ENCODE measurements at regions of chr12 and their contacts with region 1.

Region 1: DNA sequence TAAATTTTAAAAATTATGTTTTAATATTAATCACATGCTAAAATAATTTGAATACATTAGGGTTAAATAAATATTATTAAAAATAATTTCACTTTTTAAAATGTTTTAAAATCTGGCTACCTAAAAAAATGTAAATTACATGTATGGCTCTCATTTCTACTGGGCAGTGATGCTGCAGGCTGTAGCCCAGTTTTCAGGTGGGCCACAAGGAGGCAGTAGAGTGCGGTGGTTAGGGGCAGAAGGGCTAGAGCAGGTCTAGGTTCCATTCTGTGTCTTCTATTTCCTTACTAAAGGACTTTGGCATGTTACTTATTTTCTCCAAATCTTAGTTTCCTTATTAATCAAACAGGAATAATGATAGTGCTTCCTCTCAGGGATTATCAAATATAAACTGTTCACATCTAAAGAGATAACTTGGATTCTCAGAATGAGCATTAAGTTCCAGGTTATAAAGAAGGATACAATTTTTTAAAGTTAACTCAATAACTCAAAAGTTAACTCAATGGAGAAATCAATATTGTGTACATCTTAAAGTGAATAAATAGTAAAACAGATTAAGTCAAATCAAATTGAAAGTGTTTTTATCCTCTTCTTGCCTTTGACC is 54.9 kb upstream of the OVCH1 start:
- DNase-seq: peak; percentile 30
- H3K4me3 ChIP-seq: no peak overlapping the region
- H3K27ac ChIP-seq: no peak overlapping the region
- H3K4me1 ChIP-seq: no peaks in the 10 kb centered on the region
- H3K27me3 ChIP-seq: no peaks in the 10 kb centered on the region
- CTCF ChIP-seq: peak; percentile 88 to 97

Region 2: GRCh38 chr12:29844667-29845066 is 292.2 kb after region 1 on chr12:
- CTCF ChIA-PET with region 1: no interaction called
- dilution Hi-C with region 1: no loop called
- in situ Hi-C with region 1: no loop called
- intact Hi-C with region 1: loop called (anchors 2 kb)
- DNase-seq: peak; percentile 54
- H3K4me3 ChIP-seq: no peak overlapping the region
- H3K27ac ChIP-seq: no peak overlapping the region
- H3K4me1 ChIP-seq: no peaks in the 10 kb centered on the region
- H3K27me3 ChIP-seq: peaks cover 1% of the 10 kb centered on the region
- CTCF ChIP-seq: peak in 1 of 2 donors; percentile 43

Region 3: DNA sequence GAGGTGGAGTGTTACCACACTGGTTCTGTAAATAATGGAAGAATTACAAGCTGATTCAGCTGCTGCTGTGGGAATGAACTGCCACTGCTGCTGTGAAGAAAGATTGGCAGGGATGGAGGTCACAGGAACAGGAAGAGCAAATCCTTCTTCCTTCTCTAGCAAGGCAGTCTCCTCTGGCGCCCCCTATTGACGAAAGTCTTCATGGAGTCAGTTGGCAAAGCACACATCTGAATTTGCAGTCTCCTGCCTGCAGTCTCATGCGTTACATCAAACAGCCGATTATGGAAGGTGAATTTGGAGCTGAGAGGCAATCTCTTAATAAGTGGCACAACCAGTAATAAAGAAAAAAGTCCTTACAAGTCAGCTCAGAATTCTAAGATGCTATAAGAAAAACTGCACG is 337.3 kb after region 1 on chr12:
- CTCF ChIA-PET with region 1: no interaction called
- dilution Hi-C with region 1: no loop called
- in situ Hi-C with region 1: no loop called
- intact Hi-C with region 1: loop called (anchors 1 kb)
- DNase-seq: peak; percentile 52
- H3K4me3 ChIP-seq: no peak overlapping the region
- H3K27ac ChIP-seq: no peak overlapping the region
- H3K4me1 ChIP-seq: no peaks in the 10 kb centered on the region
- H3K27me3 ChIP-seq: no peaks in the 10 kb centered on the region
- CTCF ChIP-seq: peak; percentile 61 to 82

Region 4: GRCh38 chr12:30000401-30000800 is 448.0 kb after region 1 on chr12:
- CTCF ChIA-PET with region 1: no interaction called
- dilution Hi-C with region 1: no loop called
- in situ Hi-C with region 1: no loop called
- intact Hi-C with region 1: loop called (anchors 10 kb)
- DNase-seq: no peak
- H3K4me3 ChIP-seq: no peak overlapping the region
- H3K27ac ChIP-seq: no peak overlapping the region
- H3K4me1 ChIP-seq: no peaks in the 10 kb centered on the region
- H3K27me3 ChIP-seq: no peaks in the 10 kb centered on the region
- CTCF ChIP-seq: no peak

Region 5: GRCh38 chr12:30286345-30286926 is 734.0 kb after region 1 on chr12:
- CTCF ChIA-PET with region 1: no interaction called
- dilution Hi-C with region 1: no loop called
- in situ Hi-C with region 1: no loop called
- intact Hi-C with region 1: loop called (anchors 1 kb)
- DNase-seq: peak; percentile 16
- H3K4me3 ChIP-seq: no peak overlapping the region
- H3K27ac ChIP-seq: no peak overlapping the region
- H3K4me1 ChIP-seq: no peaks in the 10 kb centered on the region
- H3K27me3 ChIP-seq: no peaks in the 10 kb centered on the region
- CTCF ChIP-seq: peak; percentile 69 to 75

Measured in mammary epithelial cell (primary cell).